ENCODE measurements at regions of chr1 and their contacts with region 1.

Region 1: GRCh38 chr1:22930235-22930912 is 42.3 kb downstream of the LACTBL1 start:
- DNase-seq: peak; percentile 91
- ATAC-seq: peak; percentile 96
- H3K4me3 Mint-ChIP-seq: no peak overlapping the region
- H3K27ac Mint-ChIP-seq: no peak overlapping the region
- H3K4me1 Mint-ChIP-seq: no peaks in the 10 kb centered on the region
- H3K27me3 Mint-ChIP-seq: peaks cover 3% of the 10 kb centered on the region; the same call in 1 of the 2 replicates
- CTCF ChIP-seq: peak; percentile 85

Region 2: DNA sequence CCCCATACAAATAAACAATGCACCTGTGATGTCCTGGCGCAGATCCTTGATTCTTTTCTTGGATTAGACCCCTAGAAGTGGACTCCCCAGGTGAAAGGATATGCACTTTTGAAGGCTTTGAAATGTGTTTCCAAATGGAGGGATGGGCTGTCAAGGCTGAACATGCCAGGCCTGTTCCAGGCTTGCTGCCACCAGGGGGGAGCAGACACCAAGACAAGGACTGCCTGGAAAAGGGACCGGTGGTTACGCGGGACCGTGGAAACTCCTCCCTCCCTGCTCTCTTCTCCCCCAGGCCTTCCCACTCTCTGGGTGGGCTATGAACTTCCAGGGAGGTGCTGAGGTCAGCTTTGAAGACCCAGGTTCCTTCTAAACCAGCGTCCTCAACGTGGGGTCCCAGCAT is 264.6 kb before region 1 on chr1:
- CTCF ChIA-PET with region 1: interaction called, 15 read pairs
- POLR2A ChIA-PET with region 1: no interaction called
- DNase-seq: peak; percentile 72
- ATAC-seq: peak; percentile 27
- H3K4me3 Mint-ChIP-seq: no peak overlapping the region
- H3K27ac Mint-ChIP-seq: no peak overlapping the region
- H3K4me1 Mint-ChIP-seq: no peaks in the 10 kb centered on the region; the same call in 1 of the 2 replicates
- H3K27me3 Mint-ChIP-seq: no peaks in the 10 kb centered on the region
- CTCF ChIP-seq: peak; percentile 52

Region 3: DNA sequence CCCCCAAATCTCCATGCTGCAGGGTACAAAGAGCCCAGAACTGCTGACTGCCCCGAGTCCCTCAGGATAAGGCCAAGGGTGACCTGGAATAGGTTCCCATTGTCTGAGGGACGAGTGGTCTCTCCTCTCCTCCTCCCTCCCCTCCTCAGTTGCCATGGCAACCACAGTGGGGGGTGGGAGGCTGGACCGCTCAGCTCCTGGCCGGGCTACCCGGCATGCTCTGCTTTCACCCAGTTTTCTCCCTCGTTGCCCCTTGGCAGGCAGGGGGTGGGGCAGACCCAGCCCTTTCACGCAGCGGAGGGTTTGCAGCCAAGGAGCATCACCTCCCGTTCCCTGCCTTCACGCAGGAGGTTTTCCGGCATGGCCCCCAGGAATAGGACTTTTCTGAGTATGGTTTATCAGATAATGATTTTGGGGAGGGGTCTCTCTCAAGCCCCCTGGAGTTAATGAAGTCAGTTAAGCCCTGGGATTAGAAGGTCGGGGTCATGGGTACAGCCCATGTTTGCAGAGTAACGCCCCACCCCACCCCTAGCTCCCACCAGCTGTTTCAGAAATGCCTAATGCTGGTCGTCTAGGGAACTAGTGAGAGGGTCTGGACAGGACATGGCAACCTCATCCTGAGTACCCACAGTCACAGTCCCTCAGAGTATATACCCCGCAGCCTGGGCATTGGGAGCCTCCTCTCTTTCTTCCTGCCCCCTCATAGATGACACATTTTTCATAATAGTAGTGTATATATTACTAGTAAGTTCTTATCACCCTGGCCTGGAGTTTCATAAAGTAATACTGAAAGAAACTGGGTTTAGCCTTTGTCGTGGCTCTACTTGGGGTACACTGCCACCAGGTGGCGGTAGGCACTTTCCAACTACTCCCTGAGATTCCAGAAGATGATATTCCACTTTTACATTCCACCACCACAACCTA is 256.6 kb before region 1 on chr1:
- CTCF ChIA-PET with region 1: interaction called, 27 read pairs
- POLR2A ChIA-PET with region 1: no interaction called
- DNase-seq: peak; percentile 67
- ATAC-seq: peak; percentile 49
- H3K4me3 Mint-ChIP-seq: no peak overlapping the region
- H3K27ac Mint-ChIP-seq: no peak overlapping the region
- H3K4me1 Mint-ChIP-seq: peaks cover 7% of the 10 kb centered on the region; the same call in 1 of the 2 replicates
- H3K27me3 Mint-ChIP-seq: no peaks in the 10 kb centered on the region
- CTCF ChIP-seq: peak; percentile 46

Region 4: DNA sequence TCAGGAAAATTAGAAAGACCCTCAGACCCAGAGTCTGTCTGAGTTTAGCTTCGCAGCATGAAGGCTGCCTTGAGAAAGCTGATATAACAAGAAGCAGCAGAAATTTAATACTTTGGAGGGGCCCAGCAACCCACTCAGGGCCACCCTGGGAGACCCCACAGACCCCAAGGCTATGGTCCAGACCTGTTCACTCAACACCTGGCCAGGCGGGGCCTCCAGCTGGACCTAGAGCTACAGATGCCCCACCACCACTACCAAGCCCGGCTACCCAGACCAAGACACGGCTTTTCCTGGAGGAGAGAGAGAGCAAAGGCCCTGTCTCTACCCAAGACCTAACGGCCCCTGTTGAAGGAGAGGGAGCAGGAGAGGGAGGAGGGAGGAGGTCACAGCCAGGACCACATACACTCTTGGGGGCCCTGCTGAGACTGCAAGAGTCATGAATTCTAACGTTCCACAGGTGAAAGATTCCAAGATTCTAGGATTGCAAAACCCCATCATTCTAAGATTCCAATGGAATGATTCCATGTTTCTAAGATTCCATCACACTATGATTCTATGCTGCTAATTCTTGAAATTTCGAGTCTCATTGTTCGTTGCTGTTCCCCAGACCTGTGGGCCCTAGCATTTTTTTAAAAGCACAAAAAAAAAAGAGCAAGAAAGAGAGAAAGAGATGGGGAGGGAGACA is 10.9 kb before region 1 on chr1:
- CTCF ChIA-PET with region 1: interaction called, 14 read pairs
- POLR2A ChIA-PET with region 1: interaction called, 3 read pairs
- DNase-seq: no peak
- ATAC-seq: no peak
- H3K4me3 Mint-ChIP-seq: no peak overlapping the region
- H3K27ac Mint-ChIP-seq: no peak overlapping the region
- H3K4me1 Mint-ChIP-seq: no peaks in the 10 kb centered on the region
- H3K27me3 Mint-ChIP-seq: no peaks in the 10 kb centered on the region
- CTCF ChIP-seq: no peak

Region 5: GRCh38 chr1:22969304-22969709 is 38.9 kb after region 1 on chr1:
- CTCF ChIA-PET with region 1: interaction called, 10 read pairs
- POLR2A ChIA-PET with region 1: no interaction called
- DNase-seq: no peak
- ATAC-seq: no peak
- H3K4me3 Mint-ChIP-seq: no peak overlapping the region
- H3K27ac Mint-ChIP-seq: no peak overlapping the region
- H3K4me1 Mint-ChIP-seq: peaks cover 12% of the 10 kb centered on the region
- H3K27me3 Mint-ChIP-seq: peaks cover 17% of the 10 kb centered on the region
- CTCF ChIP-seq: no peak

Measured in WTC11 (cell line).